Activated CD4-positive, alpha-beta memory T cell treated with anti-CD3 and anti-CD28 coated beads for 36 hours (primary cell): ENCODE measurements at regions of chr14 and their contacts with region 1.

Region 1: GRCh38 chr14:39432179-39432618 is at the start of gene FBXO33:
- DNase-seq: peak; percentile 98
- H3K4me3 Mint-ChIP-seq: peak within 1 kb of the TSS; percentile 99
- H3K27ac Mint-ChIP-seq: peak within 1 kb of the TSS; percentile 100
- H3K4me1 Mint-ChIP-seq: peaks cover 36% of the 10 kb centered on the region
- H3K27me3 Mint-ChIP-seq: no peaks in the 10 kb centered on the region
- total RNA-seq, gene FBXO33: 17.4 to 18.8 TPM

Region 2: GRCh38 chr14:39102969-39103957 is 328.9 kb before region 1 on chr14 and contains the start of gene SEC23A:
- CTCF ChIA-PET with region 1: interaction called, 3 read pairs
- POLR2A ChIA-PET with region 1: interaction called, 22 read pairs
- intact Hi-C with region 1: loop called (anchors 1 kb)
- DNase-seq: peak; percentile 90
- H3K4me3 Mint-ChIP-seq: peak within 1 kb of the TSS; percentile 96
- H3K27ac Mint-ChIP-seq: peak within 1 kb of the TSS; percentile 96
- H3K4me1 Mint-ChIP-seq: peaks cover 42% of the 10 kb centered on the region
- H3K27me3 Mint-ChIP-seq: no peaks in the 10 kb centered on the region
- total RNA-seq, gene SEC23A: 52.4 to 54.9 TPM

Region 3: GRCh38 chr14:39169541-39169900 is 262.7 kb before region 1 on chr14:
- CTCF ChIA-PET with region 1: no interaction called
- POLR2A ChIA-PET with region 1: interaction called, 15 read pairs
- intact Hi-C with region 1: loop called (anchors 1 kb)
- DNase-seq: no peak
- H3K4me3 Mint-ChIP-seq: peak overlapping the region; percentile 85
- H3K27ac Mint-ChIP-seq: peak overlapping the region; percentile 96
- H3K4me1 Mint-ChIP-seq: peaks cover 37% of the 10 kb centered on the region
- H3K27me3 Mint-ChIP-seq: no peaks in the 10 kb centered on the region

Region 4: DNA sequence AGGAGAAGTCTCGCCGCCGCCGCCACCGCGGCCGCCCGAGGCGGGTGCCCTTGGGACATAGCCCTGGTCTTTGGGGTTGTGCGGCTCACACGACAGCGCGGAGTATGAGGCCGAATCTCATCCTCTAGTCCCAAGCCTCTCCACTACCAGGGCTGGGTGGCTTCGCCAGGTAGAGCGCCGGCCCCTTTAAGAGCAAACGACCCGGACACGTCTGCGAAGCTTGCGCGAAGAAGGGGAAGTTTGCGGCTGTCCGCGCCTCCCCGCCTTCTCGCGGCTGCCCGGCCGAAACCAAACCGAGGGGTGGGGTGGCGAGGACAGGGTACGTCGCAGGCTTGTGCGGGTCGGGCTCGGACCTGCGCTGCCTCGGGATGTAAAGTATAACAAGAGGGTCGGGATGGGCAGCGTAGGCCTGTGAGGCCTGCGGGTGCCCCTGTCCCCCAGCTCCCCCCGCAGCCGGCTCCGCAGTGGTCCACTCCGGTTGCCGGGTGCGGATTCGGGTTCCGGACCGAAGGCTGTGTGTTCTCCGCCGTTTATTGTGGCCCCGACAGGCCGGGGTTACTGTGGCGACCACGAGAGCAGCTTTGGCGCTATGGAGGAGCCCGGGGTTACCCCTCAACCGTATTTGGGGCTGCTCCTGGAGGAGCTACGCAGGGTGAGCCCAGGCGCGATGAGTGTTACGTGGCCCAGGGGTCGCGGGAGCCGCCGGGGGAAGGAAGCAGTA is 165.2 kb before region 1 on chr14:
- CTCF ChIA-PET with region 1: no interaction called
- POLR2A ChIA-PET with region 1: interaction called, 13 read pairs
- intact Hi-C with region 1: loop called (anchors 1 kb)
- DNase-seq: peak; percentile 79
- H3K4me3 Mint-ChIP-seq: peak overlapping the region; percentile 84
- H3K27ac Mint-ChIP-seq: peak overlapping the region; percentile 90
- H3K4me1 Mint-ChIP-seq: peaks cover 46% of the 10 kb centered on the region
- H3K27me3 Mint-ChIP-seq: no peaks in the 10 kb centered on the region

Region 5: DNA sequence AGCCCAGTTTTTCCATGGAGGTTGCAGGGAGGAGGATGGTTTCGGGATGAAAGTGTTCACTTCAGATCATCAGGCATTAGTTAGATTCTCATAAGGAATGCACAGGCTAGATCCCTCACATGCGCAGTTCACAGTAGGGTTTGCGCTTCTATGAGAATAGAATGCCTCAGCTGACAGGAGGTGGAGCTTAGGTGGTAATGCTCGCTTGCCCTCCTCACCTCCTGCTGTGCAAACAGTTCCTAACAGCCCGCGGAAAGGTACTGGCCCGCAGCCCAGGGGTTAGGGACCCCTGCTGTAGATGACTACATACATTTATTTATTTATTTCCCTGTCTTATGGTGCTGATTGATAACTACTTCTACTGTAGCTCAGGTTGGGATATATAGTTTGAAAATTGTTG is 93.2 kb before region 1 on chr14:
- CTCF ChIA-PET with region 1: no interaction called
- POLR2A ChIA-PET with region 1: no interaction called
- intact Hi-C with region 1: no loop called
- DNase-seq: no peak
- H3K4me3 Mint-ChIP-seq: no peak overlapping the region
- H3K27ac Mint-ChIP-seq: no peak overlapping the region
- H3K4me1 Mint-ChIP-seq: peaks cover 12% of the 10 kb centered on the region
- H3K27me3 Mint-ChIP-seq: no peaks in the 10 kb centered on the region

Region 6: DNA sequence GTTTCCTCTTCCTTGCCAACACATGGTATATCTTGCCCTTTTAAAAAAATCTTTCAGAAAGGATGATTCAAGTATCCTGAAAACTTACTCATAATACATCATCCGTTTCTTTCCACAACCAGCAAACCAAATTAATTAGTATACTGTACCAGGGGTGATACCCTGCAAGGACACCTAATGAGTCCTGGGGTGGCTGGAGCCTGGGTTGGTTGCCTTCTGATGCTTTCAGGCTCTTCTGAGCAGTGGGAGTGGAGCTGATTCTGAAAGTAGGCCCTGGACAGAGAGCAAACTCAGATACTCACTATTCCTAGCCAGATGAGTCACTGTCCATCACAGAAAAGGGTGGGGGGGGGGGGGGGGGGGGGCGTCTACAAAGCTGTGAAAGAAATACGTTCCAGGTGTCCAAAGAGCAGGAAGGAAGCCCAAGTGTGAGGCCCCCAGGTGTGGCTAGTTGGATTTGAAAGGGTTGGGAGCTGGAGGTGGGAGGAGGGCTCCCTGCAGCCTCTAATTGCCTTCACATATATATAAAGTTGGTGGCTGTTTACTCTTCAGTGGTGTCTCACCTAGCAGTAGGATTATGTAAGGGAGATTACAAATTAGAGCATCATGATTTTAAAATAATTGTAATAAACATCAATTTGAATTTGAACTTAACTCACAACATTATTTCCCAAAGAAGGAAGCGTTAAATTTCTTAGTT is 36.5 kb before region 1 on chr14:
- CTCF ChIA-PET with region 1: no interaction called
- POLR2A ChIA-PET with region 1: interaction called, 3 read pairs
- intact Hi-C with region 1: loop called (anchors 5 kb)
- DNase-seq: peak; percentile 30
- H3K4me3 Mint-ChIP-seq: no peak overlapping the region
- H3K27ac Mint-ChIP-seq: peak overlapping the region; percentile 60
- H3K4me1 Mint-ChIP-seq: peaks cover 13% of the 10 kb centered on the region
- H3K27me3 Mint-ChIP-seq: no peaks in the 10 kb centered on the region

Region 7: GRCh38 chr14:39474416-39474911 is 42.3 kb after region 1 on chr14:
- CTCF ChIA-PET with region 1: no interaction called
- POLR2A ChIA-PET with region 1: no interaction called
- intact Hi-C with region 1: no loop called
- DNase-seq: peak; percentile 15
- H3K4me3 Mint-ChIP-seq: no peak overlapping the region
- H3K27ac Mint-ChIP-seq: no peak overlapping the region
- H3K4me1 Mint-ChIP-seq: peaks cover 5% of the 10 kb centered on the region
- H3K27me3 Mint-ChIP-seq: no peaks in the 10 kb centered on the region

Region 8: GRCh38 chr14:39505812-39506211 is 73.6 kb after region 1 on chr14:
- CTCF ChIA-PET with region 1: no interaction called
- POLR2A ChIA-PET with region 1: no interaction called
- intact Hi-C with region 1: no loop called
- DNase-seq: no peak
- H3K4me3 Mint-ChIP-seq: no peak overlapping the region
- H3K27ac Mint-ChIP-seq: no peak overlapping the region
- H3K4me1 Mint-ChIP-seq: no peaks in the 10 kb centered on the region
- H3K27me3 Mint-ChIP-seq: peaks cover 3% of the 10 kb centered on the region